Right ventricle myocardium inferior (tissue), 1 donor: ENCODE measurements at regions of chr18 and their contacts with region 1.

Region 1: DNA sequence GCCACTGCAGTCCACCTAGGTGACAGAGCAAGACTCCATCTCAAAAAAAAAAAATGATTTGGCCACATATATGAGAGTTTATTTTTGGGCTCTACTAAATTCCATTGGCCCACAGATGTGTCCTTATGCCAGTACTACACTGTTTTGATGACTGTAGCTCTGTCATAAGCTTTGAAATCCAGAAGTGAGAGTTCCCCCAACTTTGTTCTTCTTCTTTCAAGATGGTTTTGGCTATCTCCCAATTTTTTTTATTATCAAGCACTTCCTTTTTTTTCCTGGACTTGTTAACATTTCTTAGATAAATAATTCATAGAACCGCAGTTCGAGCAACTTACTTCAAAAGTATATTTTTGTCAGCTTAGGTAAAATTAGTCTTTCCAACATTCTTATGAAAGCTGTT is 96.9 kb downstream of the TSHZ1 start:
- DNase-seq: no peak
- ATAC-seq: no peak

Region 2: DNA sequence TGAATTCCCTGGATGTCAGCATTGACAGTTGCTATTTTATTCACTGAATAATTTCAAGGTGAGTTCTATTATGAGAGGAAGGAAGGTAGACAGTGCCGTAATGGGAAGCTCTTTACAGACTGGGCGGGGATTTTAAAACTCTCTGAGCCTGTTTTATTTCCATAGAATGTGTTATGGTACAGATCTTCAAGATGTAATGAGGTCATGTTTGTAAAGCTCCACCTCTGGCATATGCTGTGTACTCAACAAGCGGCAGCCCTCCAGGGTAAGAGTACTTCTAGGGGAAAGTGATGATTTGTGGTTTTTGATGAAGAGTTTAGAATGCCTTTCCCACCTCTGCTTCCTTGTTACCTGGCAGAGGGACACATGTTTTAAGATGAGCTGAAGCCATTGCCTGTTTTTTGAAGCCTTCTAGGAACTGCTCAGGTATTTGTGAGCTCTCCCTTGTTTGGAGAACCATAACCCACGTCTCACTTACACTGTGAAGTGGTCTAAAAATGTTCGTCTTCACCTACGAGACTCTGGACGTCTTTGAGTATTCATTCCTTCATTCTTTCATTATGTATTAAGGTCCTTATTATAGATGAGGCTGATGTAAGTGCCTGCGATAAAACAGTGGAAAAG is 349.8 kb before region 1 on chr18:
- intact Hi-C with region 1: no loop called
- DNase-seq: no peak
- ATAC-seq: no peak

Region 3: DNA sequence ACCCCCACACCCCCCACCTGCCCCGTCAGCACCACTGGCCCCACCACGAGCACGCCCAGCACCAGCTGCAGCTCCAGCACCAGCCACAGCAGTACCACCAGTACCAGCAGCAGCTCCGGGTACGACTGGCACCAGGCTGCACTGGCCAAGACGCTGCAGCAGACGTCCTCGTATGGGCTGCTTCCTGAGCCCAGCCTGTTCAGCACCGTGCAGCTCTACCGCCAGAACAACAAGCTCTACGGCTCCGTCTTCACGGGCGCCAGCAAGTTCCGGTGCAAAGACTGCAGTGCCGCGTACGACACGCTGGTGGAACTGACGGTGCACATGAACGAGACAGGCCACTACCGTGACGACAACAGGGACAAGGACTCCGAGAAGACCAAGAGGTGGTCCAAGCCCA is 21.7 kb before region 1 on chr18:
- intact Hi-C with region 1: loop called (anchors 1 kb)
- DNase-seq: no peak
- ATAC-seq: no peak

Region 4: DNA sequence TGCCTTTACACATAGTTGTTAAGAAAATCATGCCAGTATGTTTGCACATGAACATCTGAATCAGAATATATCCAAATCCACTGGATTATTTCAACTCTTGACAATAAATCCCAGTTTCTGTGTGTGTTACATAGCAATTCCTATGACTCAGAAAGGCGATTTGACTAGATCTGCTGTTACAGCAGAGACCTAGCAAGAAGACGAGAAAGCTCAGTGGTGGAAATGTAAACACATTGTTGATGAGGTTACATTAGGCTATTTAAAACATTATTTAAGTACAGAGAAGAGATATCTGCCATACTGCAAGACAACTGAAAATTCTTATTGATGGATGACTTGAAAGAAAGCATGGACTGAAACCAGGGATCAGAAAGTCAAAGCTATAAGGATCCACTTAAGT is 193.0 kb after region 1 on chr18:
- intact Hi-C with region 1: no loop called
- DNase-seq: no peak
- ATAC-seq: no peak

Region 5: GRCh38 chr18:75700561-75700960 is 393.0 kb after region 1 on chr18:
- intact Hi-C with region 1: no loop called
- DNase-seq: no peak
- ATAC-seq: no peak